Activated T-helper 1 cell treated with anti-CD3 and anti-CD28 coated beads, Interleukin-12 subunit alpha, Interleukin-12 subunit beta, Interleukin-2, Interleukin-4 antibody, amounts not matched to agents 30 ng/mL and 10 ng/mL and 1 ng/mL, durations not matched to agents 14 hours and 24 hours and 36 hours (primary cell): ENCODE measurements at regions of chr4 and their contacts with region 1.

Region 1: DNA sequence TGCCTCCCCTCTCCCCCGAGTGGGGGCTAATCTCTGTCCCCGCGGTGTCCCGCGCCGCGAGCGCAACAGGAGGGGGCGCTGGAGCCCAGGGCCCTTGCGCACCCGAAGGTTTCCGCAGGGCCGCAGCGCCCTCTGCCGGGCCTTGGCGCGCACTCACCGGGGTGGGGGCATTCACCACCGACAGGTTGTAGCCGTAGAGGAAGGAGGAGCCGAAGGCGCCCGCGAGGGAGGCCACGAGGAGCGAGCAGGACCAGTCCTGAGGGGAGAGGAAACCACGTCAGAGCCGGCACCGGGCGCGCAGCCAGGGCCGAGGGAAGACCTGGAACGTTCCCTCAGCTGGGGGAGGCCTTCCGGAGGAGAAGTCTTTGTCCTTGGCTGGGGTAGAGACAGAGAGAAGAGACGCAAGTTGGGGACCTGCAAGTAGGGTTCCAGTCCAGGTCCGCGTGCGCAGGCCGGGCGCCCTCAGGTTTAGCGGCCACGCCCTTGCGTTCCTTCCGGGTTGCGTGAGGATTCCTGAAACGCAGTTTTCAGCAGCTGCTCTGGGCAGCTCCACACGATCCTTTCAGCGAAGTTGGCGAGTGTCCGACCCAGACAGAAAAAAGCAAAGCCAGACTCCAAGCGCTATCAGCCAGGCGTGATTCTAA is 2.4 kb downstream of the SLC2A9 start:
- DNase-seq: peak; percentile 94
- H3K4me3 Mint-ChIP-seq: peak overlapping the region; percentile 87
- H3K27ac Mint-ChIP-seq: peak overlapping the region; percentile 95
- H3K4me1 Mint-ChIP-seq: peaks cover 17% of the 10 kb centered on the region
- H3K27me3 Mint-ChIP-seq: peaks cover 5% of the 10 kb centered on the region

Region 2: DNA sequence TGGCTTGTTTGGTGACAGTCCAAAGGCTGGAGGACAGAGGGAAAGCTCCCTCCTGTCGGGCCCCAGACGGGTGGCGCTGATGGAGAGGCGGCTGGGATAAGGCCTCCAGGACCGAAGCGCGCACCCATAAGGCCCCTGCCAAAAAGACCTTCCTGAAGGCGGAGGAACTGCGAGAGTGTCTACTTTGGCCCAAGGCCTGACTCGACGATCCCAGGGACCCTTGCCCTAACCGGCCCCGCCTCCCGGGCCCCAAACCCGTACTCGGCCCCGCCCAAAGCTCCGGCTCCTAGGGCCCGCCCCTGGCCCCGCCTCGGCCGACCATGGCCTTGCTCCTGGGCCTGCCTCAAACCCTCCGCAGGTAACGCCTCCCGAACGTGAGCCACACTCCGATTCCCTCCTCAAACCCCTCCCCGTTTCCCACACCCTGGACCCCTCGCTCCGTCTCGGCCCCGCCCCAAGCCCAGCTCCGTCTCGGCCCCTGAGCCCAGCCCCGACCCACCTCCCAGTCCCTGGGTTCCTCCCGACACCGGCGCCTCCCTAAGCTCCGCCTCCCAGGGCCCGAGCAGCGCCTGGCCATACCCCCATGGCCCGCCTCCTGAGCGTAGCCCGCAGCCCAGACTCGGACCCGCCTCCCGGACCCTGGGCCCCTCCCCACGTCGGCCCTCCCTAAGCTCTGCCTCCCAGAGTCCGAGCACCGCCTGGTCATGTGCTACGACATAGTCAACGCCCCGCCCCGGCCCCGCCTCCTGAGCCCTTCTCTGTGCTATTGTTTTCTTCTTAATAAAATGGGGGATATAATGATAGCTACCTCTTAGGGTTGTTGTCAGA is 327.5 kb before region 1 on chr4:
- intact Hi-C with region 1: loop called (anchors 1 kb)
- DNase-seq: peak; percentile 85
- H3K4me3 Mint-ChIP-seq: peak overlapping the region; percentile 79
- H3K27ac Mint-ChIP-seq: no peak overlapping the region
- H3K4me1 Mint-ChIP-seq: peaks cover 16% of the 10 kb centered on the region
- H3K27me3 Mint-ChIP-seq: peaks cover 5% of the 10 kb centered on the region

Region 3: DNA sequence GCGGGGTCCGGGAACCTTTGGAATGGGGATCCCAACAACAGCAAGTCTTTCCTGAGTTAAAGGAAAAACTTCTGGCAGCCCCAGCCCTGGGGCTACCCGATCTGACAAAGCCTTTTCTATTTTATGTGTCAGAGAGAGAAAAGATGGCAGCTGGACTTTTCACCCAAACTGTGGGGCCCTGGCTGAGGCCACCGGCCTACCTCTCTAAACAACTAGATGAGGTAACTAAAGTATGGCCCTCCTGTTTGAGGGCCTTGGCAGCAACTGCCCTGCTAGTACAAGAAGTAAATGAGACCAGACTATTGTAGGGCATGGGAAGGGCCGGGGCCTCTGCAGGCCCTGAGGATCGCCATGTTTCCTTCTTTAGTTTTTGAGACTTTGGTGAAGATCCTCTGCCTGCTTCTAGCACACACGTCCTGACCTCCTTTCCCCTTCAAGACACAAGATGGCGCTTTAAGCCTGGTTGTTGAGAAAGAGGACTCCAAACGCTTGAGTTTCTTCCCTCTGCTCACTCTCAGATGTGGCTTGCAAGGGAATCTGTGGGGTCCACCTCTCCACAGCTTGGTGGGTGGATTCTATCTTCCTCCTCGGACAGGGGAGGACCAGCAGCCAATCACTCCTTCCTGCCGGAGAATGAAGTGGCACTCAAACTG is 256.0 kb before region 1 on chr4:
- intact Hi-C with region 1: loop called (anchors 1 kb)
- DNase-seq: peak; percentile 40
- H3K4me3 Mint-ChIP-seq: no peak overlapping the region
- H3K27ac Mint-ChIP-seq: no peak overlapping the region
- H3K4me1 Mint-ChIP-seq: no peaks in the 10 kb centered on the region
- H3K27me3 Mint-ChIP-seq: peaks cover 11% of the 10 kb centered on the region

Region 4: GRCh38 chr4:10096201-10096977 is 77.4 kb after region 1 on chr4:
- intact Hi-C with region 1: loop called (anchors 2 kb)
- DNase-seq: peak; percentile 72
- H3K4me3 Mint-ChIP-seq: peak overlapping the region; percentile 62
- H3K27ac Mint-ChIP-seq: peak overlapping the region; percentile 99
- H3K4me1 Mint-ChIP-seq: peaks cover 94% of the 10 kb centered on the region
- H3K27me3 Mint-ChIP-seq: no peaks in the 10 kb centered on the region

Region 5: GRCh38 chr4:10530137-10530786 is 511.3 kb after region 1 on chr4:
- intact Hi-C with region 1: loop called (anchors 10 kb)
- DNase-seq: no peak
- H3K4me3 Mint-ChIP-seq: no peak overlapping the region
- H3K27ac Mint-ChIP-seq: no peak overlapping the region
- H3K4me1 Mint-ChIP-seq: no peaks in the 10 kb centered on the region
- H3K27me3 Mint-ChIP-seq: peaks cover 11% of the 10 kb centered on the region